ENCODE measurements at regions of chr17 and their contacts with region 1.

Region 1: GRCh38 chr17:36072431-36073121 is 8.5 kb downstream of the CCL18 start:
- DNase-seq: peak; percentile 57 to 76 (median 70)
- ATAC-seq: peak; percentile 91 to 98 (median 96)
- H3K4me3 ChIP-seq: no peak overlapping the region
- H3K27ac ChIP-seq: no peak overlapping the region
- H3K4me1 ChIP-seq: no peaks in the 10 kb centered on the region
- H3K27me3 ChIP-seq: no peaks in the 10 kb centered on the region
- CTCF ChIP-seq: peak; percentile 74 to 93 (median 88)
- POLR2A ChIP-seq: no peak

Region 2: GRCh38 chr17:35238821-35239220 is 833.8 kb before region 1 on chr17:
- intact Hi-C with region 1: no loop called
- DNase-seq: no peak
- ATAC-seq: no peak
- H3K4me3 ChIP-seq: no peak overlapping the region
- H3K27ac ChIP-seq: no peak overlapping the region
- H3K4me1 ChIP-seq: peaks cover 0 to 9% (median 0%) of the 10 kb centered on the region in 4 donors
- H3K27me3 ChIP-seq: no peaks in the 10 kb centered on the region
- CTCF ChIP-seq: no peak
- POLR2A ChIP-seq: no peak

Region 3: GRCh38 chr17:35981908-35982330 is 90.7 kb before region 1 on chr17:
- intact Hi-C with region 1: loop called (anchors 10 kb)
- DNase-seq: peak; percentile 77 to 89 (median 88)
- ATAC-seq: peak; percentile 71 to 86 (median 74)
- H3K4me3 ChIP-seq: peak overlapping the region; percentile 48 to 95 (median 59)
- H3K27ac ChIP-seq: peak overlapping the region; percentile 56 to 88 (median 61)
- H3K4me1 ChIP-seq: peaks cover 0 to 39% (median 16%) of the 10 kb centered on the region in 4 donors
- H3K27me3 ChIP-seq: no peaks in the 10 kb centered on the region
- CTCF ChIP-seq: peak; percentile 42 to 86 (median 64)
- POLR2A ChIP-seq: no peak

Measured in right lobe of liver (tissue), 6 donors.